Natural killer cell (primary cell): ENCODE measurements at regions of chr19 and their contacts with region 1.

Region 1: GRCh38 chr19:1767464-1767933 is 14.2 kb downstream of the ONECUT3 start:
- DNase-seq: peak; percentile 69 to 78
- ATAC-seq: peak; percentile 72 to 87 (median 82)
- H3K4me3 ChIP-seq: no peak overlapping the region
- H3K4me3 Mint-ChIP-seq: no peak overlapping the region
- H3K27ac ChIP-seq: no peak overlapping the region
- H3K27ac Mint-ChIP-seq: no peak overlapping the region
- H3K4me1 ChIP-seq: peaks cover 9% of the 10 kb centered on the region
- H3K4me1 Mint-ChIP-seq: peaks cover 0 to 6% of the 10 kb centered on the region in 2 donors
- H3K27me3 ChIP-seq: peaks cover 50% of the 10 kb centered on the region
- H3K27me3 Mint-ChIP-seq: peaks cover 37 to 57% of the 10 kb centered on the region in 2 donors
- CTCF ChIP-seq: peak; percentile 89

Region 2: GRCh38 chr19:1551068-1552040 is 216.1 kb before region 1 on chr19:
- intact Hi-C with region 1: loop called (anchors 1 kb)
- DNase-seq: no peak
- ATAC-seq: no peak
- H3K4me3 ChIP-seq: no peak overlapping the region
- H3K4me3 Mint-ChIP-seq: no peak overlapping the region
- H3K27ac ChIP-seq: no peak overlapping the region
- H3K27ac Mint-ChIP-seq: no peak overlapping the region
- H3K4me1 ChIP-seq: peaks cover under 1% of the 10 kb centered on the region
- H3K4me1 Mint-ChIP-seq: peaks cover 0 to 1% of the 10 kb centered on the region in 2 donors
- H3K27me3 ChIP-seq: no peaks in the 10 kb centered on the region
- H3K27me3 Mint-ChIP-seq: peaks cover 0 to 6% of the 10 kb centered on the region in 2 donors
- CTCF ChIP-seq: no peak

Region 3: DNA sequence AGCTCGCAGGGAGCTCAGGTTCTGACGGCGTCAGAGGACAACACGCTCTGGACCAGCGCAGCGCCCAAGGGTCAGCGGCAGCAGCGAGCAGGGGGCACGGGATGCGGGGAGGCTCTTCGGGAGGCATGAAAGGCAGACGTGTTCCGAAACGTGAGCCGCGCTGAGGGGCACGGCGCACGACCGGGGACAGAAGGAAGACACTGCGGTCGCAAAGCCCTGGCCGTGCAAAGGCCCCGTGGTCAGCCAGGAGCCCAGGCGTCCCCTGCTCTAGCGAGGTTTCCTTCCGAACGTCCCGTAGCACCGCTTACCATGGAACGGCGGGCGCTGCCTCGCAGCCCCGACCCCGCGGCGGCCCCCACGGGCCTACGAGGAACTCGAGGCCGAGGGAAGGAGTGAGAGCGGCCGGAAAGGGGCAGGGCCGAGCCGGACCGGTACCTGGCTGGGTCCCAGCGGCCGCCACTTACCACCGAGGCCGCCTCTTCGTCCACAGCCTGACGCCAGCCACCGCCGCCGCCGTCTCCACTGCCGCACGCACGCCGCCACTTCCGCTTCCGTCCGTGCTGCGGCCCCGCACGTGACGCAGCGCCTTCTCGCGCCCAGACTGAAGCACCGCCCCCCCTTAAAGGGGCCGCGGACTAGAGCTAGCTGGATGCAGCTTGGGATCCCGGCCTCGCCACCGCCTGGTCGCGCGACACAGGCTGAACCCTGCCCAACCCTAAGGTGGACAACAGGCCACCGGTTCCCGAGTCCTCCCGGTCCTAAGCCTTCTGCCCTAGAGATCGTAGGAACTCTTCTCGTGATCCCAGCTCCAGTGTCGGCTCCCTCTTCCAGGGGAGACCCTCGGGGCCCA is 108.4 kb after region 1 on chr19:
- intact Hi-C with region 1: no loop called
- DNase-seq: peak; percentile 92 to 94
- ATAC-seq: peak; percentile 85 to 93 (median 87)
- H3K4me3 ChIP-seq: peak overlapping the region; percentile 81
- H3K4me3 Mint-ChIP-seq: peak overlapping the region; percentile 97
- H3K27ac ChIP-seq: peak overlapping the region; percentile 91
- H3K27ac Mint-ChIP-seq: peak overlapping the region; percentile 97 to 98
- H3K4me1 ChIP-seq: peaks cover 50% of the 10 kb centered on the region
- H3K4me1 Mint-ChIP-seq: peaks cover 43 to 44% of the 10 kb centered on the region in 2 donors
- H3K27me3 ChIP-seq: no peaks in the 10 kb centered on the region
- H3K27me3 Mint-ChIP-seq: no peaks in the 10 kb centered on the region
- CTCF ChIP-seq: no peak